ENCODE measurements at regions of chrX and their contacts with region 1.

Region 1: DNA sequence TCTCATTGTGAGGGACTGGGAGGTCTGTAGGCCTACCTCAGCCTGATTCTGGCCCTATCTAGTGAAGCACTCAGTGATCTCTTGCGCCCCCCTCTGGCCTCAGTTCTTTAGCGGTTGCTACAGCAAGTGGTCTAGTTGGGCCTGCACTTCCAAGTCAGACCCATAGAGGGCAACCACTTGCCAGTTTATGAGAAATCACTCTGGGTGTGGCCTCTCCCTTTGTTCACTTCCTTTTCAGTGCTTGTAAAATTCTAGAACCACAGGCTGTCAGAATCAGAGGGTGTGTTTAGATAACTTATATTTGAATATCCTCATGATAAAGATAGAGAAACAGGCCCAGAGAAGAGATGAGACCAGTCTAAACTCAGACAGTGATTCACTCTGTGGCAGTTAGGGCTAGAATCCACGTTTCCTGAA is 60.9 kb upstream of the LAS1L start:
- DNase-seq: peak; percentile 67 to 94 (median 87)
- ATAC-seq: peak; percentile 97
- H3K4me3 ChIP-seq: peak overlapping the region; percentile 41
- H3K4me3 Mint-ChIP-seq: peak overlapping the region in 9 of 10 donors; percentile 58 to 79 (median 76)
- H3K27ac ChIP-seq: peak overlapping the region; percentile 74
- H3K27ac Mint-ChIP-seq: peak overlapping the region; percentile 89 to 100 (median 96)
- H3K4me1 ChIP-seq: peaks cover 38 to 41% of the 10 kb centered on the region in 2 donors
- H3K4me1 Mint-ChIP-seq: peaks cover 27 to 59% (median 50%) of the 10 kb centered on the region in 7 donors
- H3K27me3 ChIP-seq: no peaks in the 10 kb centered on the region
- H3K27me3 Mint-ChIP-seq: no peaks in the 10 kb centered on the region

Region 2: GRCh38 chrX:65667503-65668376 is 72.3 kb after region 1 on chrX and contains the start of gene MSN:
- CTCF ChIA-PET with region 1: interaction called, 5 read pairs
- POLR2A ChIA-PET with region 1: interaction called, 44 read pairs
- intact Hi-C with region 1: loop called (anchors 1 kb)
- DNase-seq: peak; percentile 46 to 81 (median 65)
- ATAC-seq: peak; percentile 92
- H3K4me3 ChIP-seq: peak within 1 kb of the TSS; percentile 81
- H3K4me3 Mint-ChIP-seq: peak within 1 kb of the TSS; percentile 88 to 99 (median 95)
- H3K27ac ChIP-seq: peak within 1 kb of the TSS; percentile 79
- H3K27ac Mint-ChIP-seq: peak within 1 kb of the TSS; percentile 80 to 97 (median 93)
- H3K4me1 ChIP-seq: peaks cover 11 to 12% of the 10 kb centered on the region in 2 donors
- H3K4me1 Mint-ChIP-seq: peaks cover 29 to 41% (median 34%) of the 10 kb centered on the region in 7 donors
- H3K27me3 ChIP-seq: no peaks in the 10 kb centered on the region
- H3K27me3 Mint-ChIP-seq: no peaks in the 10 kb centered on the region
- total RNA-seq, gene MSN: 267 to 635 (median 274) TPM

Region 3: DNA sequence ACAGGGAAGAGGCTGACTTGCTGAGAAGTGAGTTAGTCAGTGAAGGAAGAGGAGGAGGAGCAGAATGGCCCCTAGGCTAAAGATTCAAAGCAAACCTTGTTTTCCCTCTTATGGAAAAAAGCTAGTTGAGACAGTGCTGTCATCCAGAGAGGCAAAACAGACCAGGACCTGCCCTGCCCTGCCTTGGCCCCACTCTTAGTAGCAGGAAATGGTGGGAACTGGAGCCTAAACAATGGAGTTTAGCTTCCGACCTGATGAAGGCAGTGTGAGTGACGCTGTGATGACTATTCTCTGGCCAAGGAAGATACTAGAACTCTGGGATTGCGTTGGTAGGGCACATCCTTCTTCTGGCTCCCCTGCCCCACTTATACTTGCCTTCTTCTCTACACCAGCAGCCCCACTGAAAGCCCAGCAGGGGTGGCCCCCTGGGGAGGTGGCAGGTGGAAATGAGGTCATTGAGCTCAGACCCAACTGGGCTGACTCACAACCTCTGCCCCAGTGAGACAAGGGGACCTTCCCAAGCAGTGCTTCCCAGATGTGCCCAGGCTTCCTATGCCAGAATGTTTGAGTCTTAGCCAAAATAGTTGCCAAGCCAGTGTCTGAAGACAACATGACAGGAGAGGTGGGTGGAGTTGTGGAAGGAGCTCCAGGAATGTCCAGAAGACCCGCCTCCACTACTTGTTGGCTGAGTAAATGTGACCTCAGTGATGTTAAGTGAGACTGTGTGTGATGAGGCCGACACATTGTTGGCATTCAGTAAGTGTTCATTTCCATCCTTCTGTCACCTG is 110.8 kb after region 1 on chrX:
- CTCF ChIA-PET with region 1: interaction called, 9 read pairs
- POLR2A ChIA-PET with region 1: interaction called, 3 read pairs
- intact Hi-C with region 1: loop called in 1 of 2 experiments (anchors 1 kb)
- DNase-seq: peak in 1 of 9 donors; percentile 46
- ATAC-seq: peak; percentile 66
- H3K4me3 ChIP-seq: no peak overlapping the region
- H3K4me3 Mint-ChIP-seq: peak overlapping the region in 9 of 10 donors; percentile 64 to 79 (median 72)
- H3K27ac ChIP-seq: peak overlapping the region; percentile 64
- H3K27ac Mint-ChIP-seq: peak overlapping the region; percentile 75 to 96 (median 89)
- H3K4me1 ChIP-seq: peaks cover 50 to 52% of the 10 kb centered on the region in 2 donors
- H3K4me1 Mint-ChIP-seq: peaks cover 33 to 78% (median 67%) of the 10 kb centered on the region in 7 donors
- H3K27me3 ChIP-seq: no peaks in the 10 kb centered on the region
- H3K27me3 Mint-ChIP-seq: no peaks in the 10 kb centered on the region

Region 4: GRCh38 chrX:65821721-65822496 is 226.4 kb after region 1 on chrX:
- CTCF ChIA-PET with region 1: no interaction called
- POLR2A ChIA-PET with region 1: no interaction called
- intact Hi-C with region 1: loop called in 1 of 2 experiments (anchors 1 kb)
- DNase-seq: peak; percentile 4 to 36 (median 22)
- ATAC-seq: peak; percentile 78
- H3K4me3 ChIP-seq: peak overlapping the region; percentile 47
- H3K4me3 Mint-ChIP-seq: peak overlapping the region; percentile 75 to 89 (median 80)
- H3K27ac ChIP-seq: peak overlapping the region; percentile 28
- H3K27ac Mint-ChIP-seq: peak overlapping the region; percentile 6 to 91 (median 78)
- H3K4me1 ChIP-seq: peaks cover 0 to 2% of the 10 kb centered on the region in 2 donors
- H3K4me1 Mint-ChIP-seq: peaks cover 0 to 16% (median 12%) of the 10 kb centered on the region in 7 donors
- H3K27me3 ChIP-seq: no peaks in the 10 kb centered on the region
- H3K27me3 Mint-ChIP-seq: peaks cover 0 to 18% (median 0%) of the 10 kb centered on the region in 5 donors

Region 5: GRCh38 chrX:65985922-65986588 is 390.6 kb after region 1 on chrX:
- CTCF ChIA-PET with region 1: interaction called, 4 read pairs
- POLR2A ChIA-PET with region 1: no interaction called
- intact Hi-C with region 1: loop called (anchors 1 kb)
- DNase-seq: peak in 8 of 9 donors; percentile 28 to 61 (median 46)
- ATAC-seq: peak; percentile 92
- H3K4me3 ChIP-seq: no peak overlapping the region
- H3K4me3 Mint-ChIP-seq: peak overlapping the region in 1 of 10 donors; percentile 15
- H3K27ac ChIP-seq: no peak overlapping the region
- H3K27ac Mint-ChIP-seq: peak overlapping the region in 5 of 9 donors; percentile 51 to 83 (median 61)
- H3K4me1 ChIP-seq: peaks cover 0 to 20% of the 10 kb centered on the region in 2 donors
- H3K4me1 Mint-ChIP-seq: peaks cover 7 to 32% (median 26%) of the 10 kb centered on the region in 7 donors
- H3K27me3 ChIP-seq: no peaks in the 10 kb centered on the region
- H3K27me3 Mint-ChIP-seq: no peaks in the 10 kb centered on the region

Region 6: DNA sequence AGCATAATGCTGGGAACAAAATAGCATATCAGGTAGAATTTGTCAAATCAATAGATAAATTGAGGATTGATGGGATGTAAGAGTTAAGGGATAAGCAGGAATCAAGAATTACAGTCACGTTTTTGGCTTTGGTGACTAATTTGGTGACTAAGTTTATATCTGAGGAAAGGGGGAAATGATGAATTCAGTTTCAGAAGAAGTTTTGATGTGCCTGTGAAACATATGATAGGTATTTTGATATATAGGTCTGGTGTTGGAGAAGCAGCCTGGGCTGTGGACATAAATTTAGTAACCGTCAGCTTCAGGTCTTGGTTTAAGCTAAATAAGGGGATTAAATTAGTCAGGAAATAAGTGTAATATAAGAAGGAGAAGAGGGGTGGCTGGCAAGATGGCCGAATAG is 1122.5 kb after region 1 on chrX:
- CTCF ChIA-PET with region 1: no interaction called
- POLR2A ChIA-PET with region 1: no interaction called
- intact Hi-C with region 1: no loop called
- DNase-seq: no peak
- ATAC-seq: no peak
- H3K4me3 ChIP-seq: no peak overlapping the region
- H3K4me3 Mint-ChIP-seq: no peak overlapping the region
- H3K27ac ChIP-seq: no peak overlapping the region
- H3K27ac Mint-ChIP-seq: no peak overlapping the region
- H3K4me1 ChIP-seq: no peaks in the 10 kb centered on the region
- H3K4me1 Mint-ChIP-seq: peaks cover 0 to 4% (median 0%) of the 10 kb centered on the region in 7 donors
- H3K27me3 ChIP-seq: no peaks in the 10 kb centered on the region
- H3K27me3 Mint-ChIP-seq: peaks cover 0 to 18% (median 4%) of the 10 kb centered on the region in 5 donors

Measured in naive thymus-derived CD4-positive, alpha-beta T cell (primary cell).